GM12878 (cell line): ENCODE measurements at regions of chr11 and their contacts with region 1.

Region 1: GRCh38 chr11:119284344-119285157 is 32.4 kb downstream of the MCAM start:
- DNase-seq: no peak
- ATAC-seq: peak; percentile 93
- H3K4me3 ChIP-seq: no peak overlapping the region
- H3K27ac ChIP-seq: no peak overlapping the region
- H3K4me1 ChIP-seq: no peaks in the 10 kb centered on the region
- H3K27me3 ChIP-seq: no peaks in the 10 kb centered on the region
- CTCF ChIP-seq: peak; percentile 48 to 75 (median 55)
- EP300 ChIP-seq: no peak
- POLR2A ChIP-seq: no peak
- RAD21 ChIP-seq: peak; percentile 82

Region 2: DNA sequence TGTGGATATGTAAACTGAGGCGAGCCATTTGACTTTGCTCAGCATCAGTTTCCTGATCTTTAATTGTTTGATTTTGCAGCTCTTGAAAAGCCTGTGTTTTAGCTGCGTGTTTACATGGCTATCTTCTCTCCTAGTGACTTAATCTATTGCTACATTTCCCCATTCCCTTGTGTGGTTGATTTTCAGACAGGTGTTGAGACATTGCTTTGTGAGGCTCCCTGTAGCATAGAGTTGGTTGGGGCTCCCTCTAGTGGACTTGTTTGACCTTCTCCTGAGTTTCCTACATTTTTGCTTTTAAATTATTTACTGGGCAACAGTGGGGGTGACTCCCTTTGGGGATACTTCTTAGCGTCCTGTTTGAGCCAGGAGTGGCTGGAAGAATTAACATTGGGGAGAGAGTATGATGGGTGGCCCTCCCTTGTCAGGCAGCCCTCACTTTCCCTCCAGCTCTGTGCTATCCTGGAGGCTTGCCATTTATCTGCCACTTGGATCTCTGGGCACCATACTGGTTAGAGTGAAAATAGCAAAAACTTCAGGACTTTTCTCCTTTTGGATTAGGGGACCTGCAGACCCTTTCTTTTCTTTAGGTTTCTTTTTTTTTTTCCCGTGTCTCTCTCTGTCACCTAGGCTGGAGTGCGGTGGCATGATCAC is 87.6 kb before region 1 on chr11:
- CTCF ChIA-PET with region 1: interaction called, 19 read pairs
- POLR2A ChIA-PET with region 1: interaction called, 4 read pairs
- RAD21 ChIA-PET with region 1: interaction called, 7 read pairs
- SMC1A ChIA-PET with region 1: interaction called, 5 read pairs
- in situ Hi-C with region 1: no loop called
- intact Hi-C with region 1: no loop called
- DNase-seq: peak; percentile 59
- ATAC-seq: peak; percentile 97
- H3K4me3 ChIP-seq: no peak overlapping the region
- H3K27ac ChIP-seq: no peak overlapping the region
- H3K4me1 ChIP-seq: no peaks in the 10 kb centered on the region
- H3K27me3 ChIP-seq: 0 out of 4 replicates have a peak, but pooled peaks cover 0 to 2% of the 10 kb centered on the region in 2 experiments
- CTCF ChIP-seq: peak; percentile 75 to 92 (median 84)
- EP300 ChIP-seq: no peak
- POLR2A ChIP-seq: no peak
- RAD21 ChIP-seq: peak; percentile 92

Region 3: DNA sequence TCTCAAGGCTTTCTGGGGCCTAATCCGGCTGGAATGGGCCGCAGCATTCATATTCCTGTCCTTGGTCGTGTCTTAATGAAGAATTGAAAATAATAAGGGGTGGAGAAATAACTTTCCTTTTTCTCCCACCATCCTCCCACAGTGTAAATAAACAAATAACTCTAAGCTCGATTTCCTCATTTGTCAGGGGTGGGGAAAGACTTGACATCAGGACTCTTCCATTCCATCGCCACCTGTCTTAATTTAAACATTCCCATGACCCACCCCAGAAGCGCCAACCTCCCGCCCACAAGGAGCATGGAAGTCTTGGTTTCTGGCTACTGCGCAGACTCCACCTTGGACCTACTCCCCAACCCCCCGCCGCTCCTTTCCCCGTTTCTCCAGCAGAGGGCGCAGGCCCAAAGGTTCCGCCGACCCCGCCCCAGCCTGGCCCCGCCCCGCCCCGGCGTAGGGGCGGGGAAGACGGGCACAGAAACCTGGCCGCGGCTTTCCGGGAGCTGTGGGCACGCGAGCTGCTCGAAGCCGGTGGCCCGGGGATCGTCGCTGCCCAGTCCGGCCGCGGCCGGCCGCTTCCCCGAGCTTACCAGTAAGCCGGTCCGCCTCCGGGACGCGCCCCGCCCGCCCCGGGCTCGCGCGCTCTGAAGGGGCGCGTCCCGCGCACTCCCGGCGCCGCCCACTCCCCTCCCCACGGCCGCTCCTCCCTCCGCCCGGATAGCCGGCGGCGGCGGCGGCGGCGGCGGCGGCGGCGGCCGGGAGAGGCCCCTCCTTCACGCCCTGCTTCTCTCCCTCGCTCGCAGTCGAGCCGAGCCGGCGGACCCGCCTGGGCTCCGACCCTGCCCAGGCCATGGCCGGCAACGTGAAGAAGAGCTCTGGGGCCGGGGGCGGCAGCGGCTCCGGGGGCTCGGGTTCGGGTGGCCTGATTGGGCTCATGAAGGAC is 78.7 kb before region 1 on chr11 and contains the start of gene CBL:
- CTCF ChIA-PET with region 1: interaction called, 54 read pairs
- POLR2A ChIA-PET with region 1: interaction called, 9 read pairs
- RAD21 ChIA-PET with region 1: interaction called, 10 read pairs
- SMC1A ChIA-PET with region 1: interaction called, 9 read pairs
- in situ Hi-C with region 1: no loop called
- intact Hi-C with region 1: loop called (anchors 1 kb)
- DNase-seq: peak; percentile 47
- ATAC-seq: peak; percentile 91
- H3K4me3 ChIP-seq: peak within 1 kb of the TSS; percentile 93
- H3K27ac ChIP-seq: peak within 1 kb of the TSS; percentile 88
- H3K4me1 ChIP-seq: peaks cover 9% of the 10 kb centered on the region
- H3K27me3 ChIP-seq: no peaks in the 10 kb centered on the region
- CTCF ChIP-seq: peak; percentile 85 to 92 (median 91)
- EP300 ChIP-seq: no peak
- POLR2A ChIP-seq: peak; percentile 81
- RAD21 ChIP-seq: peak; percentile 62
- polyA plus RNA-seq, gene CBL: 3.9 to 7.6 TPM